ENCODE measurements at regions of chr3 and their contacts with region 1.

Region 1: GRCh38 chr3:108914774-108915641 is 38.7 kb downstream of the GUCA1C start:
- DNase-seq: peak; percentile 72
- H3K4me3 Mint-ChIP-seq: peak overlapping the region; percentile 19
- H3K27ac Mint-ChIP-seq: peak overlapping the region; percentile 40
- H3K4me1 Mint-ChIP-seq: peaks cover 14% of the 10 kb centered on the region
- H3K27me3 Mint-ChIP-seq: peaks cover 17% of the 10 kb centered on the region

Region 2: GRCh38 chr3:108662130-108662738 is 252.8 kb before region 1 on chr3:
- CTCF ChIA-PET with region 1: interaction called, 72 read pairs
- POLR2A ChIA-PET with region 1: interaction called, 11 read pairs
- DNase-seq: peak; percentile 52
- H3K4me3 Mint-ChIP-seq: no peak overlapping the region
- H3K27ac Mint-ChIP-seq: no peak overlapping the region
- H3K4me1 Mint-ChIP-seq: peaks cover 16% of the 10 kb centered on the region
- H3K27me3 Mint-ChIP-seq: peaks cover 2% of the 10 kb centered on the region

Region 3: GRCh38 chr3:108757404-108757982 is 157.5 kb before region 1 on chr3 and contains the start of gene RETNLB:
- CTCF ChIA-PET with region 1: interaction called, 11 read pairs
- POLR2A ChIA-PET with region 1: no interaction called
- DNase-seq: no peak
- H3K4me3 Mint-ChIP-seq: no peak within 1 kb of the TSS
- H3K27ac Mint-ChIP-seq: no peak within 1 kb of the TSS
- H3K4me1 Mint-ChIP-seq: no peaks in the 10 kb centered on the region
- H3K27me3 Mint-ChIP-seq: no peaks in the 10 kb centered on the region
- total RNA-seq, gene RETNLB: not detected

Region 4: GRCh38 chr3:108818404-108818803 is 96.6 kb before region 1 on chr3:
- CTCF ChIA-PET with region 1: interaction called, 98 read pairs
- POLR2A ChIA-PET with region 1: interaction called, 36 read pairs
- DNase-seq: peak; percentile 78
- H3K4me3 Mint-ChIP-seq: peak overlapping the region; percentile 1
- H3K27ac Mint-ChIP-seq: peak overlapping the region; percentile 22
- H3K4me1 Mint-ChIP-seq: peaks cover 31% of the 10 kb centered on the region
- H3K27me3 Mint-ChIP-seq: no peaks in the 10 kb centered on the region

Region 5: GRCh38 chr3:108862865-108863798 is 51.9 kb before region 1 on chr3:
- CTCF ChIA-PET with region 1: interaction called, 11 read pairs
- POLR2A ChIA-PET with region 1: no interaction called
- DNase-seq: peak; percentile 31
- H3K4me3 Mint-ChIP-seq: no peak overlapping the region
- H3K27ac Mint-ChIP-seq: peak overlapping the region; percentile 74
- H3K4me1 Mint-ChIP-seq: peaks cover 50% of the 10 kb centered on the region
- H3K27me3 Mint-ChIP-seq: no peaks in the 10 kb centered on the region

Region 6: DNA sequence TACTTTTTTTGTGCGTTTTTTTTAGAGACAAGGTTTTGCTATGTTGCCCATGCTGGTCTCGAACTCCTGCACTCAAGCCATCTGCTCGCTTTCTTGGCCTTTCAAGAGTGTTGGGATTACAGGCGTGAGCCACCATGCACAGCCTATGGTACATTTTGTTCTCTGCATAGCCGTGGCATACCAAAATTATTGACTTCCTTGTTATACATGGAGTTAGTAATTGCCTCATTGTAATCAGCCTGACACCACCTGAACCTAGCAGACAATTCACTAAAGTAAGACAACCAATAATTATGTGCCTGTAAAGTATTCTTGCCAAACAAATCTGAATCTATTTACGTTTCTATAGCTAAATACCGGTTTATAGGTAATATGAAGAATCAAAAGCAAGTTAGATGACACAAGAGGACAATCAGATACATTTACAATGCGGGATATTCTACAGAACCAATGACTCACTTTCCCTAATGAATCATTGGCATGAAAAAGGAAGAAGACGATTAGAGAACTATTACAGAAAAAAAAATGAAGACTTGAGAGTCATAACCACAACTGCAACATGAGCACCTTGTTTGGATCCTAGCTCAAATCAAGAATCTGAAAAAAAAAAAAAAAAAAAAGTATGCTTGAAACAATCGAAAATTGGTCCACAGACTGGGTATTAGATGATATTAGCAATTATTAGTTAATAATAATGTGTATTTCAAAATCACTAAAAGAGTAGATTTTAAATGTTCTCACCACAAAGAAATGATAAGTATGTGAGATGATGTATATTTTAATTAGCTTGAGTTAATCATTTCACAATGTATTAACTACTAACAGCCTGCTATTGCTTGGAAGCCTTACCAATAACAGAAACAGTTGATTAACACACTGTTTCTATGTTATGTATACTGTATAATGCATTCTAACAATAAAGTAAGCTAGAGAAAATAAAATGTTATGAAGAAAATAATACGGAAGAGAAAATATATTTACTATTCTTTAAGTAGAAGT is 31.6 kb after region 1 on chr3:
- CTCF ChIA-PET with region 1: no interaction called
- POLR2A ChIA-PET with region 1: no interaction called
- DNase-seq: no peak
- H3K4me3 Mint-ChIP-seq: no peak overlapping the region
- H3K27ac Mint-ChIP-seq: no peak overlapping the region
- H3K4me1 Mint-ChIP-seq: no peaks in the 10 kb centered on the region
- H3K27me3 Mint-ChIP-seq: peaks cover 2% of the 10 kb centered on the region

Region 7: GRCh38 chr3:109033000-109033660 is 118.1 kb after region 1 on chr3:
- CTCF ChIA-PET with region 1: no interaction called
- POLR2A ChIA-PET with region 1: no interaction called
- DNase-seq: no peak
- H3K4me3 Mint-ChIP-seq: no peak overlapping the region
- H3K27ac Mint-ChIP-seq: no peak overlapping the region
- H3K4me1 Mint-ChIP-seq: no peaks in the 10 kb centered on the region
- H3K27me3 Mint-ChIP-seq: peaks cover 3% of the 10 kb centered on the region

Region 8: DNA sequence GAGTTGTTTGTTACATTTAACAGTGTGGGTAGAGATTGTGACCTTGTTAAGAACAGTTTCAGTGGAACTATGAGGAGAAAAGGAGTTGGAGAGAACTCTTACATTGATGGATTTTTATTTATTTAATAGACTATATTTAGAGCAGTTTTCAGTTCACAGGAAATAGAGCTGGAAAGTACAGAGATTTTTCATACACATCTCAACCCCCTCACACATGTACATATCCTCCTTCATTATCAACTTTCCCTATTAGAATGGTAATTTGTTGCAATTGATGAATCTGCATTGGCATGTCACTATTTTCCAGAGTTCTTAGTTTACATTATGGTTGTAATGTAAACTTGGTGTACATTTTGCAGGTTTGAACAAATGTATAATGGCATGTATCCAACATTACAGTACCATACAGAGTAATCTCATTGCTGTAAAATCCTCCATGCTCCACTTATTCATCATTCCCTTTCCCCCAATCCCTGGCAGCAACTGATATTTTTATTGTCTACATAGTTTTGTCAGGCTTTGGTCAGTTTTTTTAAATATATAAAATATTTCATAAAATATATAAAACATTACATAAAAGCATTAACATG is 1178.9 kb after region 1 on chr3:
- CTCF ChIA-PET with region 1: no interaction called
- POLR2A ChIA-PET with region 1: no interaction called
- DNase-seq: no peak
- H3K4me3 Mint-ChIP-seq: no peak overlapping the region
- H3K27ac Mint-ChIP-seq: no peak overlapping the region
- H3K4me1 Mint-ChIP-seq: no peaks in the 10 kb centered on the region
- H3K27me3 Mint-ChIP-seq: no peaks in the 10 kb centered on the region

Measured in activated CD4-positive, alpha-beta memory T cell treated with anti-CD3 and anti-CD28 coated beads, Interleukin-2, amount 10 ng/mL, durations not matched to agents 7 days and 5 days (primary cell).